Activated T-helper 1 cell treated with anti-CD3 and anti-CD28 coated beads, Interleukin-12 subunit alpha, Interleukin-12 subunit beta, Interleukin-2, Interleukin-4 antibody, amounts not matched to agents 30 ng/mL and 10 ng/mL and 1 ng/mL, durations not matched to agents 14 hours and 24 hours and 36 hours (primary cell): ENCODE measurements at regions of chr5 and their contacts with region 1.

Region 1: GRCh38 chr5:87267574-87268125 is at the start of gene RASA1:
- DNase-seq: peak; percentile 74
- H3K4me3 Mint-ChIP-seq: peak within 1 kb of the TSS; percentile 99
- H3K27ac Mint-ChIP-seq: peak within 1 kb of the TSS; percentile 90
- H3K4me1 Mint-ChIP-seq: peaks cover 22% of the 10 kb centered on the region
- H3K27me3 Mint-ChIP-seq: peaks cover 14% of the 10 kb centered on the region
- total RNA-seq, gene RASA1: 20.7 and 21.3 TPM in 2 replicates

Region 2: GRCh38 chr5:86917117-86917579 is 350.5 kb before region 1 on chr5:
- intact Hi-C with region 1: loop called (anchors 5 kb)
- DNase-seq: peak; percentile 1
- H3K4me3 Mint-ChIP-seq: no peak overlapping the region
- H3K27ac Mint-ChIP-seq: no peak overlapping the region
- H3K4me1 Mint-ChIP-seq: peaks cover 21% of the 10 kb centered on the region
- H3K27me3 Mint-ChIP-seq: peaks cover 17% of the 10 kb centered on the region

Region 3: DNA sequence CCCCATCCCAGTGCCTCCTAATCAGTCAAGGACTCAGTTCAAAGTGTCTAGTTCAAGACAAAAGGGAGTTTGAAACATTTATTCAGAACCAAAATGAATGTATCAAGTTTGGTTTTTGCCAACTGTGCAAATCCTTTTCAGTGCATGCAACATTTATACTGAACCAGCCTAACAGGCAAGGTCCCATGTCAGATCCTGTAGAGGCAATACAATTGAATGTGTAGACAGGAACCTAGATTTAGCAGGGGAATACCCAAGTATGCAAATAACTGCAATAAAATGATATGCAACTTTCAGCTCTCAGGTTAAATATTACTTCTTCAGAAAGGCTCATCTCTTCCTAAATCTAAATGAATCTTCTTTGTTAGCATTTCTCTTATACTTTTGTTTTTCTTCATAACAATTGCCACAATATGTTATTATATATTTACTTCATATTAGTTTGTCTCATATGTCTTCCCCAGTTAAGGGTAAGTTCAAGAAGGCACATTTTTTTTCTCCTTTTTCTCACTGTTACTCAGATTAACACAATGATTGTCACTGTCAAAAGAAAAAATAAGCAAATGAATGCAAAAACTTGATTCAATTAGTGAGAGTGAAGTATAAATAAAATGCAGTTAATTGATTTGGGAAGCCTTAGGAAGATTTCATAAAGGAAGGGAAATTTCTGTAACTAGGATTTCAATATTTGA is 163.9 kb before region 1 on chr5:
- intact Hi-C with region 1: no loop called
- DNase-seq: no peak
- H3K4me3 Mint-ChIP-seq: no peak overlapping the region
- H3K27ac Mint-ChIP-seq: no peak overlapping the region
- H3K4me1 Mint-ChIP-seq: peaks cover 17% of the 10 kb centered on the region
- H3K27me3 Mint-ChIP-seq: peaks cover 2% of the 10 kb centered on the region

Region 4: DNA sequence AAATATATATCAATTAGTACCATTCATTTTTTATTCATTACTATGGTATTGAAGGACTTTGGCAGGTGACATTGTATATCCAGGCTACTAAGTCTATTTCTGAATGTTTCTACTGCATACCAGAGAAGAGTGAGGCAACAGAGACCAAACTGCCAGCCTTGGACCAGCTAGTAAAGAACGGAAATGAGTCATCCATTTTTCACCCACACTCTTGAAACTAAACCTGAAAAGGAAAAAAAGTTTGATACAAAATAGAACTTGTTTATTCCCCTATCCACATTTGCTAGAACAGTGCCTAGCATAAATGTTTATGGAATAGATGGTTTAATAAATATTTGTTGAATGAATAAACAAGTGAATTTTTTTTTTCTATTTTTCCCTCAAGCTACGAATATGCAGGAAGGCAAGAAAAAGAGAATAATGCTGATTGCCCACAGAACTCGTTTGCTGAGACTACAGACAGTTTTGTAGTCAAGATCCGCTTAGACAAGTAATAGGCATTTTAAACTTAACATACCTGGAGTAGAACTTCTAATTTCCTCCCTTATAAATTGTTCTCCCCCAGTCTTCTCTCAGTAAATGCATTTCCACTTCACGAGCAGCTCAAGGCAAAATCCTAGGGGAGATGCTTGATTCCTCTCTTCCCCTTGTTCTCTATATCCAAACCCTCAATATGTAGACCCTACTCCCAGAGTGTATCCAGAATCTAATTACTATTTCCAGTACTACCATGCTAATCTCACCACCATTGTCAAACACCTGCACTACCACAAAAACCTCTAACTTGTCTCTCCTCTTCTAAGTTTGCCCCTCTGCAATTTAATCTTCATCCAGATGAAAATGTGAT is 146.1 kb before region 1 on chr5:
- intact Hi-C with region 1: loop called (anchors 1 kb)
- DNase-seq: peak; percentile 17
- H3K4me3 Mint-ChIP-seq: peak overlapping the region; percentile 40
- H3K27ac Mint-ChIP-seq: peak overlapping the region; percentile 73
- H3K4me1 Mint-ChIP-seq: peaks cover 59% of the 10 kb centered on the region
- H3K27me3 Mint-ChIP-seq: no peaks in the 10 kb centered on the region

Region 5: DNA sequence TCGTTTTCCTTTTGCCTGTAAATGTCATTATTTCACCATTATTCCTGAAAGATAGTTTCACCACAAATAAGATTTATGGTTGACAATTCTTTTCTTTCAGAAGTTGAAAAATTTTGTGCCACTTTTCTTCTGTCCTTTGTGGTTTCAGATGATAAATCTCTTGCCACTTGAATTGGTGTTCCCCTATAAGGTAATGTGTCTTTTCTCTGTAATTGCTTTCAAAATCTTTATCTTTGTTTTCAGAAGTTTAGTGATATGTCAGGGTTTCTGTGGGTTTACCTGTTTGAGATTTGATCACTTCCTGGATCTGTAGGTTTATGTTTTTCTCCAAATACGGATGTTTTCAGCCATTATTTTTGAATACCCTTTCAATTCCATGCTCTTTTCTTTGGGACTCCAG is 14.6 kb after region 1 on chr5:
- intact Hi-C with region 1: loop called (anchors 1 kb)
- DNase-seq: no peak
- H3K4me3 Mint-ChIP-seq: peak overlapping the region; percentile 25
- H3K27ac Mint-ChIP-seq: peak overlapping the region; percentile 21
- H3K4me1 Mint-ChIP-seq: peaks cover 50% of the 10 kb centered on the region
- H3K27me3 Mint-ChIP-seq: no peaks in the 10 kb centered on the region

Region 6: GRCh38 chr5:87340716-87341115 is 73.1 kb after region 1 on chr5:
- intact Hi-C with region 1: loop called (anchors 1 kb)
- DNase-seq: no peak
- H3K4me3 Mint-ChIP-seq: peak overlapping the region; percentile 70
- H3K27ac Mint-ChIP-seq: peak overlapping the region; percentile 86
- H3K4me1 Mint-ChIP-seq: peaks cover 32% of the 10 kb centered on the region
- H3K27me3 Mint-ChIP-seq: no peaks in the 10 kb centered on the region

Region 7: GRCh38 chr5:87412630-87413342 is 145.1 kb after region 1 on chr5 and contains the start of gene CCNH:
- intact Hi-C with region 1: loop called (anchors 1 kb)
- DNase-seq: peak; percentile 95
- H3K4me3 Mint-ChIP-seq: peak within 1 kb of the TSS; percentile 99
- H3K27ac Mint-ChIP-seq: peak within 1 kb of the TSS; percentile 94
- H3K4me1 Mint-ChIP-seq: peaks cover 40% of the 10 kb centered on the region
- H3K27me3 Mint-ChIP-seq: no peaks in the 10 kb centered on the region
- total RNA-seq, gene CCNH: 77.6 and 80.9 TPM in 2 replicates

Region 8: GRCh38 chr5:87844447-87844846 is 576.8 kb after region 1 on chr5:
- intact Hi-C with region 1: no loop called
- DNase-seq: no peak
- H3K4me3 Mint-ChIP-seq: no peak overlapping the region
- H3K27ac Mint-ChIP-seq: no peak overlapping the region
- H3K4me1 Mint-ChIP-seq: no peaks in the 10 kb centered on the region
- H3K27me3 Mint-ChIP-seq: no peaks in the 10 kb centered on the region